ENCODE measurements at regions of chr21 and their contacts with region 1.

Region 1: DNA sequence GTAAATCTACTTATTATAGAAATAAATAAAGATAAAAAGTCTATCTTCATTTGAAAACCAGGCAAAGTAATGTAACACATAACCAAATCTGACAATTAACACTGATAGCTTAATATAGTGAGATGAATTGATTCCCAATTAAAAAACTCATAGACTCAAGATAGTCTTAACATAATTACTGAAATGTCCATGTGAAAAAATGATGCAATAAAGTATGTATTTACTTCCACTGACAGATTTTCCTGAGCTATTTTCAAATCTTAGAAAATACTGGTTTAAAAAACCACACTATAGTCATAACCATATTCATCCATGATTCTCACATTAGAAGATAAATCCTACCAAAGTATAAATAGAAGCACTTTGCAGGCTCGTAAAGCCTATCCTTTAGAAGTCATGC is 9.6 kb upstream of the DONSON start:
- DNase-seq: no peak
- ATAC-seq: no peak
- H3K4me3 ChIP-seq: no peak overlapping the region
- H3K27ac ChIP-seq: no peak overlapping the region
- H3K4me1 ChIP-seq: no peaks in the 10 kb centered on the region
- H3K27me3 ChIP-seq: no peaks in the 10 kb centered on the region
- CTCF ChIP-seq: no peak
- POLR2A ChIP-seq: no peak
- RAD21 ChIP-seq: no peak

Region 2: DNA sequence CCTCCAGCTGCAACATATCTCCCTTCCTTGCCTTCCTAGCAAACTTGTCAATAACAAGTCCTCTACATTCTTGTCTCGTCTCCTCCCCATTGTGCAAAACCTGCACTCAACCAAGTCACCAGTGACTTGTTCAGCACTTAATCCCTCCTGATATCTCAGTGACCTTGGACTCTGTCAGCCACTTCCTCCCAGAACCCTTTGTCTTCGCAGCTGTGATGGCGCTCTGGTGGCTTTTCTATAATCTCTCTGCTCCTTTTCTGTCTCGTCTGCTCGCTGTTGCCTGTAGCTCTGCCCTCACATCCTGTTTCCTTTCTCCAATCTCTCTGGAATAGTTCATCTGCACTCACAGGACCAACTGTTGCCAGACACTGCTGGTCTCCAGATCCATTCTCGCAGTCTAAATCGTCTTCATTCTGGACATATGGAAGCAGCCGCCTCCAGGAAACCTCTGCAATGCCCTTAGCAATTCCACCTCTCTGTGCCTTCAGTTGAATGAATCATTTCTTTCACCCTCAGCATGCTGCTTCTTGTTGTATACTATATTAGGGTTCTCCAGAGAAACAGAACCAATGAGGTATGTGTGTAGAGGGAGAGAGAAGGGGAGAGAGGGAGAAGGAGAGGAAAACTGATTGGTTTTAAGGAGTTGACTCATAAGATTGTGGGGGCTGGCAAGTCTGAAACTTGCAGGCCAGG is 385.7 kb before region 1 on chr21:
- CTCF ChIA-PET with region 1: no interaction called
- POLR2A ChIA-PET with region 1: no interaction called
- dilution Hi-C with region 1: no loop called
- in situ Hi-C with region 1: no loop called
- intact Hi-C with region 1: no loop called
- DNase-seq: peak; percentile 83
- ATAC-seq: peak; percentile 95
- H3K4me3 ChIP-seq: no peak overlapping the region; the same call in 1 of the 2 replicates
- H3K27ac ChIP-seq: peak overlapping the region; percentile 58; the same call in 1 of the 2 replicates
- H3K4me1 ChIP-seq: peaks cover 9% of the 10 kb centered on the region
- H3K27me3 ChIP-seq: peaks cover 6% of the 10 kb centered on the region
- CTCF ChIP-seq: no peak
- POLR2A ChIP-seq: no peak
- RAD21 ChIP-seq: no peak

Region 3: GRCh38 chr21:33496345-33496744 is 101.7 kb before region 1 on chr21:
- CTCF ChIA-PET with region 1: no interaction called
- POLR2A ChIA-PET with region 1: interaction called, 10 read pairs
- dilution Hi-C with region 1: no loop called
- in situ Hi-C with region 1: no loop called
- intact Hi-C with region 1: no loop called
- DNase-seq: no peak
- ATAC-seq: no peak
- H3K4me3 ChIP-seq: no peak overlapping the region
- H3K27ac ChIP-seq: no peak overlapping the region
- H3K4me1 ChIP-seq: no peaks in the 10 kb centered on the region
- H3K27me3 ChIP-seq: peaks cover 8% of the 10 kb centered on the region; the same call in 1 of the 2 replicates
- CTCF ChIP-seq: no peak
- POLR2A ChIP-seq: no peak
- RAD21 ChIP-seq: no peak

Region 4: DNA sequence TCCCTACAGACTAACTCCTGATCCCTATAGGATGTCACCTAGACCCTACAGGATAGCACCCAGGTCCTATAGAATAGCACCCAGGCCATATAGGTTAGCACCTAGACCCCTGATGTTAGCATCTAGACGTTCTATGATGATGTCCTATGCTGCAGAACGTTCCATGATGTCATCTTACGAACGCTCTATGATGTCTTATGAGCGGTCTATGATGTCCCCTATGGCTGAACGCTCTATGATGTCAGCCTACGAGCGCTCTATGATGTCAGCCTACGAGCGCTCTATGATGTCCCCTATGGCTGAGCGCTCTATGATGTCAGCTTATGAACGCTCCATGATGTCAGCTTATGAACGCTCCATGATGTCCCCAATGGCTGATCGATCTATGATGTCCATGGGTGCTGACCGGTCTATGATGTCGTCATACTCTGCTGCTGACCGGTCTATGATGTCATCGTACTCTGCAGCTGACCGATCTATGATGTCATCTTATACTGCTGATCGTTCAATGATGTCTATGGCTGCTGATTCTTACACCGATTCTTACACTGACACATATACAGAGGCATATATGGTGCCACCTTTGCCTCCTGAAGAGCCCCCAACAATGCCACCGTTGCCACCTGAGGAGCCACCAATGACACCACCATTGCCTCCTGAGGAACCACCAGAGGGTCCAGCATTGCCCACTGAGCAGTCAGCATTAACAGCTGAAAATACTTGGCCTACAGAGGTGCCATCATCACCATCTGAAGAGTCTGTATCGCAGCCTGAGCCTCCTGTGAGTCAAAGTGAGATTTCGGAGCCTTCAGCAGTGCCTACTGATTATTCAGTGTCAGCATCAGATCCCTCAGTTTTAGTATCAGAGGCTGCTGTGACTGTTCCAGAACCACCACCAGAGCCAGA is 45.7 kb before region 1 on chr21:
- CTCF ChIA-PET with region 1: no interaction called
- POLR2A ChIA-PET with region 1: no interaction called
- dilution Hi-C with region 1: no loop called
- in situ Hi-C with region 1: no loop called
- intact Hi-C with region 1: no loop called
- DNase-seq: peak; percentile 22
- ATAC-seq: no peak
- H3K4me3 ChIP-seq: no peak overlapping the region
- H3K27ac ChIP-seq: no peak overlapping the region
- H3K4me1 ChIP-seq: no peaks in the 10 kb centered on the region
- H3K27me3 ChIP-seq: no peaks in the 10 kb centered on the region
- CTCF ChIP-seq: no peak
- POLR2A ChIP-seq: no peak
- RAD21 ChIP-seq: no peak

Region 5: GRCh38 chr21:33668180-33668579 is 70.1 kb after region 1 on chr21:
- CTCF ChIA-PET with region 1: no interaction called
- POLR2A ChIA-PET with region 1: no interaction called
- dilution Hi-C with region 1: no loop called
- in situ Hi-C with region 1: no loop called
- intact Hi-C with region 1: no loop called
- DNase-seq: peak; percentile 29
- ATAC-seq: peak; percentile 32; the same call in 1 of the 2 replicates
- H3K4me3 ChIP-seq: no peak overlapping the region
- H3K27ac ChIP-seq: no peak overlapping the region
- H3K4me1 ChIP-seq: peaks cover 10% of the 10 kb centered on the region
- H3K27me3 ChIP-seq: no peaks in the 10 kb centered on the region
- CTCF ChIP-seq: no peak
- POLR2A ChIP-seq: no peak
- RAD21 ChIP-seq: no peak

Region 6: DNA sequence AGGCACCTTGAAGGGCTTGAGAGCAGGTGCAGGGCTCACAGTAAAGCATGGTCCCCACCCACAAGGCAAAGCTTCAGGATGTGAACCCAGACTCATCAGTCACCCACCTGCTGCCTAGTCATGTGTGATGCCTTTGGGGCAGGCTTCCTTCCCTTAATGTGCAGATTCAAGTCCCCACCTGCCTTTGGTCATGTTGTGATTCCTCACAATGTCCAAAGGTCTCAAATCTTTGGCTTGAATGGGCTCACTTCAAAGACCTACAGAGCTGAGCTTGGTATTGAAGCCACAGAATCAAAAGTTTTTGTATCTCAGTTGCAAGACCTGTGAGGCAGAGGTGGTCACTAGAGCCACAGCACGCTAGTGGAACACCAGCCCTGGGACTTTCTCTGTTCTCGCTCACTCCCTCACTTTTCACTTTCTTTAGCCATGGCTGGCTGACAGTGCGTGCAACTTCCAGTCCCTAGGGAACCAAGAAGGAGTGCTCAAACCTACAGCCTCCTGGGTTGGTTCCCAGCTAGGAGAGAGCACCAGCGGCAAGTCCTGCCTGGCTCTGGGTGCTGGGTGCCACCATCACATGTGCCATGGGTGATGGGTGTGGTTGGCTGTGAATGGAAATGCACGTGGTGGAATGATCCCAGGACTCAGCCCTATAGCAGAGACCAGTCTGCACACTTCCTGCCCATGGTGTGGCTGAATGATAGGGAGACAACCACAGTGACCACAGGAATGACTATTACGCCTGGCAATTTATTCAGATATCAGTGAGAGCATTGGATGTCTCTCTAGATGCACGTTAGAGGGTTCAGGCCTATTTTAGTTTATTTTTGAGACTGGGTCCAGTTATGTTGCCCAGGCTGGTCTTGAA is 1044.4 kb after region 1 on chr21:
- CTCF ChIA-PET with region 1: no interaction called
- POLR2A ChIA-PET with region 1: no interaction called
- dilution Hi-C with region 1: no loop called
- in situ Hi-C with region 1: no loop called
- intact Hi-C with region 1: no loop called
- DNase-seq: peak; percentile 18
- ATAC-seq: no peak
- H3K4me3 ChIP-seq: no peak overlapping the region
- H3K27ac ChIP-seq: no peak overlapping the region
- H3K4me1 ChIP-seq: peaks cover 3% of the 10 kb centered on the region
- H3K27me3 ChIP-seq: peaks cover 2% of the 10 kb centered on the region; the same call in 1 of the 2 replicates
- CTCF ChIP-seq: no peak
- POLR2A ChIP-seq: no peak
- RAD21 ChIP-seq: no peak

Measured in IMR-90 (cell line).